ENCODE measurements at regions of chr5 and their contacts with region 1.

Region 1: GRCh38 chr5:154445422-154446182 is at the start of gene SAP30L:
- DNase-seq: peak; percentile 89
- ATAC-seq: peak; percentile 93
- H3K4me3 ChIP-seq: peak within 1 kb of the TSS; percentile 81 to 97 (median 94)
- H3K27ac ChIP-seq: peak within 1 kb of the TSS; percentile 72
- H3K4me1 ChIP-seq: peaks cover 34% of the 10 kb centered on the region
- H3K27me3 ChIP-seq: no peaks in the 10 kb centered on the region
- CTCF ChIP-seq: no peak
- EP300 ChIP-seq: no peak
- POLR2A ChIP-seq: peak; percentile 71 to 82
- RAD21 ChIP-seq: no peak
- total RNA-seq, gene SAP30L: 35.1 and 37.2 TPM in 2 replicates

Region 2: DNA sequence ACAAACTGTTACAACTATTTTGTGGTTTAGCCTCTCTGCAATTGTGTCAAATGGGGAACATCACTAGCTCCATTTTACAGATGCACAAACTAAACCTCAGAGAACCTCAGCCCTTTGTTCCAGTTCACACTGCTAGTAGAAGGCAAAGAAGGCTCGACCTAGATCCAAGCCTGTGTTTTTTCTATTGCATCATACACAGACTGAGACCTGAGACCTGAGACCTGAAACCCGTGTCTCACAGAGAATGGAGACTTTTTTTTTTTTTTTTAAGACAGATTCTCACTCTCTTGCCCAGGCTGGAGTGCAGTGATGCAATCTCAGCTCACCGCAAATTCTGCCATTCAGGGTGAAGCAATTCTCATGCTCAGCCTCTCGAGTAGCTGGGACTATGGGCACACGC is 134.2 kb before region 1 on chr5:
- CTCF ChIA-PET with region 1: no interaction called
- POLR2A ChIA-PET with region 1: no interaction called
- in situ Hi-C with region 1: no loop called
- intact Hi-C with region 1: no loop called
- DNase-seq: no peak
- ATAC-seq: no peak
- H3K4me3 ChIP-seq: no peak overlapping the region
- H3K27ac ChIP-seq: no peak overlapping the region
- H3K4me1 ChIP-seq: no peaks in the 10 kb centered on the region
- H3K27me3 ChIP-seq: no peaks in the 10 kb centered on the region
- CTCF ChIP-seq: no peak
- EP300 ChIP-seq: no peak
- POLR2A ChIP-seq: no peak
- RAD21 ChIP-seq: no peak

Region 3: DNA sequence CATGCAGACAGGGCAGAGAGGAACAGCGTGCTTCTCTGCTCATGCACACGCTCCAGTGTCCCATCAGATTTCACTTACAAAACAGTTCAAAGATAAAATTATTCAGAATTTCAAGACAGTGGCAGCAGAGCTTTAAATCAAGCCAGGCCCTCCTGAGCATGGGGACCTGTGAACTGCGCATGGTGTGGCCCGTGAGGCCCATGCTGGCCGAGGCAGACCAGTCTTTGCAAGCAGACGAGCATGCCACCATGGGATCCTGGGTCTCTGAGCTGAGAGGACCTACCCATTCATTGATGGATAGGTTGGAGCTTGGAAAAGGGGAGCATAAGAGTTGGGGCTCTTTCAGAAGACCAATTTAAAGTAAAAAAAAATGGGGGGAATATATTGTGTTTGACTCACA is 34.8 kb before region 1 on chr5:
- CTCF ChIA-PET with region 1: no interaction called
- POLR2A ChIA-PET with region 1: no interaction called
- in situ Hi-C with region 1: no loop called
- intact Hi-C with region 1: no loop called
- DNase-seq: no peak
- ATAC-seq: no peak
- H3K4me3 ChIP-seq: no peak overlapping the region
- H3K27ac ChIP-seq: no peak overlapping the region
- H3K4me1 ChIP-seq: no peaks in the 10 kb centered on the region
- H3K27me3 ChIP-seq: no peaks in the 10 kb centered on the region
- CTCF ChIP-seq: no peak
- EP300 ChIP-seq: no peak
- POLR2A ChIP-seq: no peak
- RAD21 ChIP-seq: no peak

Region 4: DNA sequence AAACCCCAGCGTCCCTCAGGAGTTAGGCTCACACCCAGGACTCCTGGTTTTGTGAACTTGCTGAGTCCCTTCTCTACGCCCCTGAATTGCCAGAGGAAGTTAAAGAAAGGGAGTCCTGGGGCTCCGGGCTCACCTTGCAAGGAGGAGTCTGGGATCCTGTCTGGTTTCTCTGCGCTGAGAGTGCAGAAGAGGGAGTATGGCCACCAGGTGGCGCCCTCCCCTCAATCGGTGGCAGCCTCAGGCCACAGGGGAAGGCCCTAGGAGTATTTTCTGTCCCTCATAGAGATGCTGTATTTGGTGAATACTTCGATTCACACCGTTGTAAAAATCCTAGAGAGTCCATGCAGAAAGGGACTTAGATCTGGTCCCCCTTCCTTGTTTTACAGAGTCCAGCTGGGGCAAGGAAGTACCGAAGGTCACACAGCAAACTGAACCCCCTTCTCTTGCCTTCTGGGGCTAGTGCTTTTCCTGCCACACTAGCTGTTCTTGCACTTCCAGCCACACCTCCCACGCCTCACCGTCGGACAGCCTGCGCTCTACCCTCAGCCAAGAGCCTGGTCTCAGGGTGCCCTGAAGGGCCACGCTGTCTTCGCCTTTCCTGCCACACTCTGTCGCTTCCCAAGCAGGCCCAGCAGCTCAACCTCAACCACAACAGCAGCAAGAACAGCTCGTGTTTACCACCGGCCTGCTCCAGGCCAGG is 22.2 kb after region 1 on chr5:
- CTCF ChIA-PET with region 1: no interaction called
- POLR2A ChIA-PET with region 1: interaction called, 5 read pairs
- in situ Hi-C with region 1: no loop called
- intact Hi-C with region 1: loop called (anchors 1 kb)
- DNase-seq: peak; percentile 31
- ATAC-seq: peak; percentile 96
- H3K4me3 ChIP-seq: peak overlapping the region in 1 of 3 experiments; percentile 23; a peak in 1 of 6 replicates
- H3K27ac ChIP-seq: no peak overlapping the region
- H3K4me1 ChIP-seq: peaks cover 54% of the 10 kb centered on the region
- H3K27me3 ChIP-seq: peaks cover 2 to 29% of the 10 kb centered on the region in 2 experiments; a peak in 3 of 5 replicates
- CTCF ChIP-seq: peak; percentile 88
- EP300 ChIP-seq: no peak
- POLR2A ChIP-seq: no peak
- RAD21 ChIP-seq: peak; percentile 67; the same call in 1 of the 2 replicates

Measured in HepG2 (cell line).